Sigmoid colon (tissue), 7 donors: ENCODE measurements at regions of chr16 and their contacts with region 1.

Region 1: GRCh38 chr16:13919683-13920509 is at the start of gene ERCC4:
- DNase-seq: peak; percentile 100
- H3K4me3 ChIP-seq: peak within 1 kb of the TSS; percentile 78 to 89 (median 88)
- H3K27ac ChIP-seq: peak within 1 kb of the TSS; percentile 77 to 85 (median 83)
- H3K4me1 ChIP-seq: peaks cover 0 to 30% (median 18%) of the 10 kb centered on the region in 4 donors
- H3K27me3 ChIP-seq: no peaks in the 10 kb centered on the region
- CTCF ChIP-seq: peak; percentile 83 to 92 (median 89)
- EP300 ChIP-seq: no peak
- POLR2A ChIP-seq: no peak
- total RNA-seq, gene ERCC4: 7.7 to 11.4 (median 10.6) TPM

Region 2: DNA sequence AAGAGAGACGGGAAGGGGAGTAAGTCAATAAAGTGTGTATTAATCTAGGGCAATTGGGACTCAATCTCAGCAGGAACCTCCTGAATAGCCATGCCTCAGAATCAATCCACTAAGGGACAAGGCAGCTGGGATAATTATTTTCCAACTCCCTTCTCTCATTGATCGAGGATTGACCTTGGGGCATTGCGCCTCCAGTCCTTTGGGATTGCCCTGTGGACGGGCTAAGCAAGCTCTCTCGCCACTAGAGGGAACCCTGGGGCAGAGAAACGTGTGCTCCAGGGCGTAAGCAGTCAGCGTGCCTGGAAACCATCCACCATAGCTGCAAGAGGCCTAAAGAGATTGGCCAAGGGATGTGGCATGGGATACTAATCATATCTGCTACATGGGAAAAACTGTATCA is 53.8 kb before region 1 on chr16:
- intact Hi-C with region 1: loop called (anchors 2 kb)
- DNase-seq: peak; percentile 75
- H3K4me3 ChIP-seq: no peak overlapping the region
- H3K27ac ChIP-seq: no peak overlapping the region
- H3K4me1 ChIP-seq: no peaks in the 10 kb centered on the region
- H3K27me3 ChIP-seq: no peaks in the 10 kb centered on the region
- CTCF ChIP-seq: peak; percentile 19 to 64 (median 41)
- EP300 ChIP-seq: no peak
- POLR2A ChIP-seq: no peak

Region 3: GRCh38 chr16:14070877-14071575 is 151.1 kb after region 1 on chr16 and contains the start of gene MRTFB:
- intact Hi-C with region 1: loop called (anchors 5 kb)
- DNase-seq: peak; percentile 83
- H3K4me3 ChIP-seq: peak within 1 kb of the TSS; percentile 91 to 96 (median 94)
- H3K27ac ChIP-seq: peak within 1 kb of the TSS; percentile 78 to 84 (median 82)
- H3K4me1 ChIP-seq: peaks cover 0 to 22% (median 13%) of the 10 kb centered on the region in 4 donors
- H3K27me3 ChIP-seq: no peaks in the 10 kb centered on the region
- CTCF ChIP-seq: no peak
- EP300 ChIP-seq: no peak
- POLR2A ChIP-seq: no peak
- total RNA-seq, gene MRTFB: 23.2 to 44.6 (median 29.3) TPM

Region 4: DNA sequence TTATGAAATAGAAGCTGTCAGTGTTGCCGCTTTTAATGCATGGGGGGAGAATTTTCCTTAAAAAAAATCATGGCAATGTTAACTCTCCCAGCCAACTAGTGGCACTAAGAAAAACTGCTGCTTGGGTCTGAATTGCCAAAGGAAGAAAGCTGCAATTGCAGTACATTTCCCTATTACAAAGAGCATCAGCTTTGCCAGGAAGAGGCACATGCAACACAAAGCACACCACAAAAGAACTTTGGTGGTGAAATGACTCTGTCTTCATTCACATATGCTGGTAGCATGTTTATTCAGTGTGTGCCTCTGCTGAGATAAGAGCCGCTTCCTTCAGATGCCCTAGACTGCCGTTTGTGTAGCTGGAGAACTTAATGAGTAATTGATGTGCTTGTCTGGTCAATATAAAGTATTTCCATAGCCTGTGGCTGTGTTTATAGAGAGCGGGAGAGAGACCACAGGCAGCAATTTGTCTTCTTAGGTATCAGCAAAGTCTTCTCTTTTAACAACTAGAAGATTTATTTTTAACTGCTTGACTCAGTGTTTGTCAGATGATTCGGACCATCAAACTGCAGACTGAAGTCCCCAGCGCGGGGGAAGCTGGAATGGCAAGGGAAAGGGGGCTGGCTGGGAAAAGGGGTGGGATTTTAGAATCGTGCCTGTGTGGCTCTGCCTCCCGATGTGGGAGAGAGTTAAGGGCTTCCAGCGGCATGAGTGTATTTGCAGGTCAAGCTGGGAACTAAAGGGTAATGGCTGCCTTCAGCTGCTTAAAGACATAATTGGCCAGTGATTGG is 266.3 kb after region 1 on chr16:
- intact Hi-C with region 1: loop called (anchors 5 kb)
- DNase-seq: no peak
- H3K4me3 ChIP-seq: peak overlapping the region; percentile 4 to 38 (median 29)
- H3K27ac ChIP-seq: peak overlapping the region; percentile 62 to 74 (median 68)
- H3K4me1 ChIP-seq: peaks cover 0 to 53% (median 23%) of the 10 kb centered on the region in 4 donors
- H3K27me3 ChIP-seq: no peaks in the 10 kb centered on the region
- CTCF ChIP-seq: peak; percentile 17 to 47 (median 30)
- EP300 ChIP-seq: no peak
- POLR2A ChIP-seq: no peak

Region 5: DNA sequence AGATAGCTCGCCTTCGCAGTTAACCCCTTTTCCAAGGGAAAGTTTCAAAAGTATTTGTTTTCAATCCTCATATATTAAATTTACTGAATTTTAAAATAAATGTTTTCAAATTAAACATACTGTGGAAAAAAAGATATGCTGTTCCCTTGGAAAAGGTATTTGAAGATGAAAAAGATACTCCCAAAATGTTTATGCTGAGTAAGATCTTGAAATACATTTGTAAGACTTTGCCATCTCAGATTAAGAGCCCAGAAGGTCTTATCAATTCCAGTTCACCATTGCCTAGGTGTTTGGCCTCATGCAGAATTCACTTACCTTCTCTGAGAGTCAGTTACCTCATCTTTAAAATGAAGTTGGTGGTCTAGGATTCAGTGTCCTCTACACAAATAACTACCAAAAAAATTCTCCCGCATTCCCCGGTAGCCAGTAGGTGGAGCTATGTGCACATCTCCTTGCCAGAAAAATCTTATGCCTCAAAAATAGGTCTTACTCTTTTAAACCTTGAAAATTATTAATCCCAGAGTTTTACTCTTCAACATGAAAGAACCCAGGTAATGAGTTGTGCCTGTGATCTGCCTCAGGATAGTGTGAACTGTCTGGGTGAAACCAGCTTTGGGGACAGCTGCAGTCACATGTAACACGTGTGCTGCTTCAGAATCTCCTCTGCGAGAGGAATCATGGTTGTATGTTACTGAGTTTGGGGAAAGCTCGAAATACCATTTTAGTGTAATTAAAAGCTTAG is 329.6 kb after region 1 on chr16:
- intact Hi-C with region 1: loop called (anchors 10 kb)
- DNase-seq: no peak
- H3K4me3 ChIP-seq: no peak overlapping the region
- H3K27ac ChIP-seq: no peak overlapping the region
- H3K4me1 ChIP-seq: peaks cover 0 to 2% (median 0%) of the 10 kb centered on the region in 4 donors
- H3K27me3 ChIP-seq: no peaks in the 10 kb centered on the region
- CTCF ChIP-seq: peak; percentile 50 to 81 (median 67)
- EP300 ChIP-seq: no peak
- POLR2A ChIP-seq: no peak

Region 6: GRCh38 chr16:14285513-14286385 is 365.9 kb after region 1 on chr16:
- intact Hi-C with region 1: loop called (anchors 1 kb)
- DNase-seq: peak; percentile 96
- H3K4me3 ChIP-seq: peak overlapping the region; percentile 66 to 83 (median 82)
- H3K27ac ChIP-seq: peak overlapping the region; percentile 83 to 93 (median 88)
- H3K4me1 ChIP-seq: peaks cover 4 to 19% (median 13%) of the 10 kb centered on the region in 4 donors
- H3K27me3 ChIP-seq: no peaks in the 10 kb centered on the region
- CTCF ChIP-seq: no peak
- EP300 ChIP-seq: no peak
- POLR2A ChIP-seq: no peak

Region 7: GRCh38 chr16:14529010-14529669 is 609.2 kb after region 1 on chr16:
- intact Hi-C with region 1: loop called (anchors 5 kb)
- DNase-seq: peak; percentile 91
- H3K4me3 ChIP-seq: peak overlapping the region in 3 of 4 donors; percentile 28 to 38 (median 29)
- H3K27ac ChIP-seq: peak overlapping the region; percentile 48 to 56 (median 50)
- H3K4me1 ChIP-seq: peaks cover 0 to 33% (median 23%) of the 10 kb centered on the region in 4 donors
- H3K27me3 ChIP-seq: no peaks in the 10 kb centered on the region
- CTCF ChIP-seq: peak; percentile 68 to 88 (median 78)
- EP300 ChIP-seq: no peak
- POLR2A ChIP-seq: no peak